ENCODE measurements at regions of chr12 and their contacts with region 1.

Region 1: DNA sequence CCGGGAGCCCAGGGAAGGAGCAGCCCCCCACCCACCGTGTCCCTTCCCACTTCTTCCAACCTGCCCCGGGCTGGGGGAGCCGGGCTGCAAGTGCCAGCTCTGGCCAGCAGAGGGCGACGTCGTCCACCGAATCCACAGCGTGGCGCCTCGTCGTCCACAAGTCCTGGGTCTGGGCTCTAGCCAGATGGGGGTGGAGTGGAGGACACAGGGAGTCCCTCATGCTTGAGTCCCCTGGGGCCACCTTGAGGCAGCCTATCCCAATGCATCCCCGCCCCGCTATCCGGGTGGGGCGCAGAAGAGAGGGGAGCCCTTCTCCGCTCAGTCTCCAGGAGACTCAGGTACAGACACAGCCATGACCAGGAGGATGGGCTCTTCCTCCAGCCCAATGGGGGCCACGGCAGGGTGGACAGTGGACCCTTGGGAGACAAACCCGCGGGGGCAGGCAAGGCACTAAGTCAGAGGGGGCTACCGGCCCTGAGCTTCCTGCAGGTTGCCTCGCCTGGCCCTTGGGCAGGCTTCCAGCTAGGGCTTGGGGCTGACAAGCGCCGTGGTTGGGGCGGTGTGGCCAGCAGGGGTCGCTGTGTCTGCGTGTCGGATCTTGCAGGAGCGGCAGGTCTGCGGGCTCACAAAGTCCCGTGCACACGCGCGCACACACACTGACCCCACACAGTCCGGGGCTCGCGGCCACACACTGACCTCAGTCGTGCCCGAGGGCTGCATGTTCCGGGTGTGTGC is 5.5 kb downstream of the AQP5 start:
- DNase-seq: peak; percentile 85 to 92 (median 90)
- H3K4me3 ChIP-seq: peak overlapping the region in 6 of 7 experiments; percentile 33 to 72 (median 56)
- H3K27ac ChIP-seq: no peak overlapping the region
- H3K4me1 ChIP-seq: peaks cover 0 to 32% (median 28%) of the 10 kb centered on the region in 4 experiments
- H3K27me3 ChIP-seq: peaks cover 0 to 50% (median 17%) of the 10 kb centered on the region in 5 experiments

Region 2: GRCh38 chr12:49866859-49867579 is 100.2 kb before region 1 on chr12:
- CTCF ChIA-PET with region 1: interaction called, 56 read pairs
- POLR2A ChIA-PET with region 1: no interaction called
- DNase-seq: peak; percentile 46 to 72 (median 67)
- H3K4me3 ChIP-seq: no peak overlapping the region
- H3K27ac ChIP-seq: no peak overlapping the region
- H3K4me1 ChIP-seq: peaks cover 0 to 32% (median 19%) of the 10 kb centered on the region in 4 experiments
- H3K27me3 ChIP-seq: peaks cover 0 to 12% (median 4%) of the 10 kb centered on the region in 5 experiments

Region 3: GRCh38 chr12:49945394-49946080 is 21.7 kb before region 1 on chr12:
- CTCF ChIA-PET with region 1: interaction called, 44 read pairs
- POLR2A ChIA-PET with region 1: no interaction called
- DNase-seq: peak; percentile 71 to 79 (median 78)
- H3K4me3 ChIP-seq: peak overlapping the region in 4 of 7 experiments; percentile 21 to 64 (median 57)
- H3K27ac ChIP-seq: no peak overlapping the region
- H3K4me1 ChIP-seq: peaks cover 2 to 6% (median 3%) of the 10 kb centered on the region in 4 experiments
- H3K27me3 ChIP-seq: peaks cover 0 to 63% (median 20%) of the 10 kb centered on the region in 5 experiments

Region 4: DNA sequence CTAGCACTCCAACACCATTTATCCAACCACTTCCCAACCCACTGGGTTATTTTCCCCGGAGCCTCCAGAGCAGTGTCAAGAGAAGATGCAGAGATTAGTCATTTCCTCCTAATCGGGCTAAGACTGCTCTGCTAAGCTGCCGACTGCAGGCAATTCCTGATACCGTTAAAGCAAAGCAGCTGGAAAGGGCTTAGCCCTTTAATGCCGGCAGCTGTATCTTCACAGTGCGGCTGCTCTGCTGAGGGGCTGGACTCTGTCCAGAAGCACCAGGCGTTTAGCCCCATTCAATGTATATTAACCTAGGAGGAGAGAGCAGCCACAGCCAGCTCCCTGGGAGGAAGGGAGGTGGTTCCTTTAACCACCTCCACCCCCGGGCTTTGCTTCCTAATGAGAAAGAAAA is 16.7 kb after region 1 on chr12:
- CTCF ChIA-PET with region 1: interaction called, 139 read pairs
- POLR2A ChIA-PET with region 1: interaction called, 4 read pairs
- DNase-seq: peak; percentile 25 to 60 (median 51)
- H3K4me3 ChIP-seq: no peak overlapping the region
- H3K27ac ChIP-seq: no peak overlapping the region
- H3K4me1 ChIP-seq: peaks cover 0 to 29% (median 22%) of the 10 kb centered on the region in 4 experiments
- H3K27me3 ChIP-seq: no peaks in the 10 kb centered on the region

Region 5: GRCh38 chr12:50003595-50003994 is 36.4 kb after region 1 on chr12:
- CTCF ChIA-PET with region 1: interaction called, 12 read pairs
- POLR2A ChIA-PET with region 1: no interaction called
- DNase-seq: no peak
- H3K4me3 ChIP-seq: no peak overlapping the region
- H3K27ac ChIP-seq: no peak overlapping the region
- H3K4me1 ChIP-seq: no peaks in the 10 kb centered on the region
- H3K27me3 ChIP-seq: no peaks in the 10 kb centered on the region

Region 6: GRCh38 chr12:50043854-50044253 is 76.6 kb after region 1 on chr12:
- CTCF ChIA-PET with region 1: interaction called, 101 read pairs
- POLR2A ChIA-PET with region 1: no interaction called
- DNase-seq: no peak
- H3K4me3 ChIP-seq: no peak overlapping the region
- H3K27ac ChIP-seq: no peak overlapping the region
- H3K4me1 ChIP-seq: peaks cover 0 to 3% (median 0%) of the 10 kb centered on the region in 4 experiments
- H3K27me3 ChIP-seq: peaks cover 0 to 10% (median 0%) of the 10 kb centered on the region in 5 experiments

Region 7: GRCh38 chr12:50055831-50056638 is 88.8 kb after region 1 on chr12:
- CTCF ChIA-PET with region 1: interaction called, 72 read pairs
- POLR2A ChIA-PET with region 1: no interaction called
- DNase-seq: peak; percentile 53 to 75 (median 67)
- H3K4me3 ChIP-seq: peak overlapping the region in 1 of 7 experiments; percentile 55
- H3K27ac ChIP-seq: no peak overlapping the region
- H3K4me1 ChIP-seq: peaks cover 2 to 52% (median 45%) of the 10 kb centered on the region in 4 experiments
- H3K27me3 ChIP-seq: peaks cover 0 to 28% (median 25%) of the 10 kb centered on the region in 5 experiments

Measured in common myeloid progenitor, CD34-positive (primary cell).